Dorsolateral prefrontal cortex (tissue), 120 donors: ENCODE measurements at regions of chr3 and their contacts with region 1.

Region 1: GRCh38 chr3:53255775-53256703 is at the start of gene TKT:
- DNase-seq: peak; percentile 74 to 89 (median 84)
- H3K4me3 ChIP-seq: peak within 1 kb of the TSS; percentile 69 to 97 (median 88)
- H3K27ac ChIP-seq: peak within 1 kb of the TSS; percentile 45 to 95 (median 87)
- H3K27me3 ChIP-seq: no peaks in the 10 kb centered on the region
- CTCF ChIP-seq: peak in 3 of 56 donors; percentile 6 to 14 (median 12)
- total RNA-seq, gene TKT: 130 to 245 (median 170) TPM

Region 2: DNA sequence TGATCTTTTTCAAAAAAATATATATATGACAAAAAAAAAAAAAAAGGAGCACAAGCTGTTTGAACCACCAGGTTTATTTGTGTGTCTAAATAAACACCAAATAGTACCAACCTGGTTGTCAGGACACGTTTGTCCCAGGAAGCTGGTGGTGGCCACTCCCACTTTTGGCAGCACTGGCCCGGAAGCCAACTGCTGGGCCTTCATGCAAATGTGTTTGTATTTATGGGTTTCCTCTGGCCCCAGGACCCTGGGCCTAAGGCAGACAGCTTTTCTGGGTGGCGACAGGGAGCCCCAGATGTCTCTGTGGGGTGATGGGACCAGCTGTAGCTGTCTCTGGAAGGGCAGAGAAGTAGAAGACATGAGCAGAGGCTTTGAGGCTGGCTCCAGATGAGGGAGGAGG is 63.4 kb before region 1 on chr3:
- intact Hi-C with region 1: no loop called
- DNase-seq: no peak
- H3K4me3 ChIP-seq: no peak overlapping the region
- H3K27ac ChIP-seq: no peak overlapping the region
- H3K27me3 ChIP-seq: no peaks in the 10 kb centered on the region
- CTCF ChIP-seq: no peak

Region 3: GRCh38 chr3:53493963-53494791 is 238.1 kb after region 1 on chr3 and contains the start of gene CACNA1D:
- intact Hi-C with region 1: loop called in 1 of 2 experiments (anchors 10 kb)
- DNase-seq: peak in 5 of 10 donors; percentile 13 to 62 (median 45)
- H3K4me3 ChIP-seq: peak within 1 kb of the TSS; percentile 41 to 82 (median 72)
- H3K27ac ChIP-seq: peak within 1 kb of the TSS in 57 of 59 donors; percentile 3 to 90 (median 73)
- H3K27me3 ChIP-seq: no peaks in the 10 kb centered on the region
- CTCF ChIP-seq: peak in 7 of 56 donors; percentile 3 to 25 (median 17)
- total RNA-seq, gene CACNA1D: 42.4 to 137 (median 88.6) TPM